ENCODE measurements at regions of chr9 and their contacts with region 1.

Region 1: GRCh38 chr9:32045513-32045912 is 338.9 kb upstream of the ACO1 start:
- DNase-seq: no peak
- ATAC-seq: no peak
- H3K4me3 Mint-ChIP-seq: no peak overlapping the region
- H3K27ac Mint-ChIP-seq: no peak overlapping the region
- H3K4me1 Mint-ChIP-seq: no peaks in the 10 kb centered on the region
- H3K27me3 Mint-ChIP-seq: no peaks in the 10 kb centered on the region

Region 2: DNA sequence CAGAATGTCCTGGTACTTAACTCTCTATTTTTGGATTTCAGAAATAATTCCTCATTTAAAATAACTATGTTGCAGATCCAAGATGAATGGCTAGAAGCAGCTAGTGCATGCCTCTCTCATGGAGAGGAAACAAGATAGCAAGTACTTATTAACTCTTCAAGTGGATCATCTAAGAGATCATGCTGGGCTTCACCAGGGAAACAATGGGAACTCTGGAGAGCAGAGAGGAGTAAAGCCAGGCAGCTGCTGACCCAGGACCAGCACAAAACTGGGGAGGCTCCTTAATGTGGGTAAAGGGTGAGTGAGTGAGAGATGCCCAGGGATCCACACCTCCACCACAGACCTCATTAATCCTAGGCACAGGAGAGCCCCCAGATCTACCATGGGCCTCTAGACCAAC is 558.9 kb before region 1 on chr9:
- CTCF ChIA-PET with region 1: no interaction called
- POLR2A ChIA-PET with region 1: no interaction called
- intact Hi-C with region 1: loop called in 1 of 2 experiments (anchors 10 kb)
- DNase-seq: no peak
- ATAC-seq: no peak
- H3K4me3 Mint-ChIP-seq: no peak overlapping the region
- H3K27ac Mint-ChIP-seq: no peak overlapping the region
- H3K4me1 Mint-ChIP-seq: no peaks in the 10 kb centered on the region
- H3K27me3 Mint-ChIP-seq: no peaks in the 10 kb centered on the region

Measured in activated CD4-positive, alpha-beta T cell treated with anti-CD3 and anti-CD28 coated beads for 36 hours (primary cell).